ENCODE measurements at regions of chr6 and their contacts with region 1.

Region 1: GRCh38 chr6:106556368-106556960 is 72.8 kb downstream of the RTN4IP1 start:
- DNase-seq: peak; percentile 52 to 67 (median 66)
- H3K4me3 ChIP-seq: no peak overlapping the region
- H3K27ac ChIP-seq: no peak overlapping the region
- H3K4me1 ChIP-seq: peaks cover under 1 to 7% (median 3%) of the 10 kb centered on the region in 4 experiments
- H3K27me3 ChIP-seq: no peaks in the 10 kb centered on the region

Region 2: DNA sequence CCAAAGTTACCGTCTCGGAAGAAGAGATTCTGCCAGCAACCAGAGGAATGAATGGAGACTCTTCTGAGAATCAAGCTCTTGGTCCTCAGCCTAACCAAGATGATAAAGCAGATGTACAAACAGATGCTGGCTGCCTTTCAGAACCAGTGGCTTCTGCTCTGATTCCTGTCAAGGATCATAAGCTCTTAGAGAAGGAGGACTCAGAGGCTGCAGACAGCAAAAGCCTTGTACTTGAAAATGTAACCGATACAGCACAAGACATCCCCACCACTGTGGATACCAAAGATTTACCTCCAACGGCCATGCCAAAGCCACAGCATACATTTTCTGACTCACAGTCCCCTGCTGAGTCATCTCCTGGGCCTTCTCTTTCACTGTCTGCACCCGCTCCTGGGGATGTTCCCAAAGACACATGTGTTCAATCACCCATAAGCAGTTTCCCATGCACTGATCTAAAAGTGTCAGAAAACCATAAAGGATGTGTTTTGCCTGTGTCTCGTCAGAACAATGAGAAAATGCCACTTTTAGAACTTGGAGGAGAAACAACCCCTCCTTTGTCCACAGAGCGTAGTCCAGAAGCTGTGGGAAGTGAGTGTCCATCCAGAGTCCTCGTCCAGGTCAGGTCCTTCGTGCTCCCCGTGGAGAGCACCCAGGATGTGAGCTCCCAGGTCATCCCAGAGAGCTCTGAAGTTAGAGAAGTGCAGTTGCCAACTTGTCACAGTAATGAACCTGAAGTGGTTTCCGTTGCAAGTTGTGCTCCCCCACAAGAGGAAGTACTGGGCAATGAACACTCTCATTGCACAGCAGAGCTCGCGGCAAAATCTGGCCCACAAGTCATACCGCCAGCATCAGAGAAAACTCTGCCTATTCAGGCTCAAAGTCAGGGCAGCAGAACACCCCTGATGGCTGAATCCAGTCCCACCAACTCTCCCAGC is 36.7 kb before region 1 on chr6:
- CTCF ChIA-PET with region 1: interaction called, 139 read pairs
- POLR2A ChIA-PET with region 1: interaction called, 3 read pairs
- DNase-seq: peak; percentile 82 to 97 (median 96)
- H3K4me3 ChIP-seq: peak overlapping the region in 6 of 7 experiments; percentile 7 to 58 (median 45)
- H3K27ac ChIP-seq: peak overlapping the region in 1 of 2 experiments; percentile 59
- H3K4me1 ChIP-seq: peaks cover 57 to 94% (median 73%) of the 10 kb centered on the region in 4 experiments
- H3K27me3 ChIP-seq: no peaks in the 10 kb centered on the region

Region 3: GRCh38 chr6:106568530-106568929 is 12.1 kb after region 1 on chr6:
- CTCF ChIA-PET with region 1: interaction called, 58 read pairs
- POLR2A ChIA-PET with region 1: no interaction called
- DNase-seq: no peak
- H3K4me3 ChIP-seq: no peak overlapping the region
- H3K27ac ChIP-seq: no peak overlapping the region
- H3K4me1 ChIP-seq: no peaks in the 10 kb centered on the region
- H3K27me3 ChIP-seq: no peaks in the 10 kb centered on the region

Region 4: DNA sequence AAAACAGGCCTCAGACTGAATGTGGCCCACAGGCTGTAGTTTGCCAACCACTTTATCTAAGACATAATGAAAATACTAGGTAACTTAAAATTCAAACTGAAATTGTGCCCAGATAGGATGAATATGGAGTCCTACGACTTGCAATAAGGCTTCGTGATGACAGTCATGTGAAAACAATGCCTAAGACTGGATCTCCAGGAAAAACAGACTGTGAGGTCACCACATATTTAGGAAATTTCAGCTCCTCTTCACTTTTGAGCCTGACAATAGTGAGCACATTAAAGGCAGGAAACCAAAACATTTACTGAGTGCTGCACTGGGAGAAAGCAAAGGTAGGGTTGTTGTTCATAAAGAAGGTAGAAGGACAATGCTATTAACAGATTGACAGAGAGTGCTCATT is 22.8 kb after region 1 on chr6:
- CTCF ChIA-PET with region 1: no interaction called
- POLR2A ChIA-PET with region 1: no interaction called
- DNase-seq: no peak
- H3K4me3 ChIP-seq: no peak overlapping the region
- H3K27ac ChIP-seq: no peak overlapping the region
- H3K4me1 ChIP-seq: no peaks in the 10 kb centered on the region
- H3K27me3 ChIP-seq: no peaks in the 10 kb centered on the region

Region 5: DNA sequence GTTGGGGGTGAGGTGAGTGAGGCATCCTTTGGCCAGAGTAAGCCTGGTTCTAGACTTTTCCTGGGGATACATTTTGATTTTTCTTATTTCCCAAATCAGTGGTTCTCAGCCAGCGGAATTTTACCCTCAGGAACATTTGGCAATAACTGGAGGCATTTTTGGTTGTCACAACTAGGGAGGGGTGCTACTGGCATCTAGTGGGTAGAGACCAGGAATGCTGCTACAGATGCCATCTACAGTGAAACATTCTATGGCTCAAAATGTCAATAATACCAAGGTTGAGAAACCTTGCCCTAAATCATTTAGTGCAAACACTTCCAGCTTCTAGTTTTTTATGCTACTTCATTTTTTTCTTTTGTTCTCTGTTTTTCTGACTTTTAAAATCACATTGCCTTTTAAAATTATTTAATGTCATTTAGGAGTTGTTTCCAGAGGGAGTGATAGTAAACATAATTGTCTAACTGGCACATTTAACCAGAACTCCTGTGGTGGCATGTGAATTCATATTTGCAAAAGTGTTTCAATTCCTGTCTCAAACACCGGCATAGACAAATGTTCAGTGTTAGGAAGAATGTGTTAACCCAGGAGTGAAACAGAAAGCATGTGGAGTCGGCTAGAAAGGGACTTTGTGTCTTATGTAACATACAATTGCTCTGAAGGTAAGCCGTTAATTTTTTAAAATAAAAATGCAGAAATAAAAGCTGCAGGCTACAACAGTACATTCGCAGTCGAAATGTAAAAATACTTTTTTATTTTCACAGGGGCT is 131.9 kb after region 1 on chr6:
- CTCF ChIA-PET with region 1: no interaction called
- POLR2A ChIA-PET with region 1: no interaction called
- DNase-seq: no peak
- H3K4me3 ChIP-seq: no peak overlapping the region
- H3K27ac ChIP-seq: no peak overlapping the region
- H3K4me1 ChIP-seq: no peaks in the 10 kb centered on the region
- H3K27me3 ChIP-seq: no peaks in the 10 kb centered on the region

Region 6: DNA sequence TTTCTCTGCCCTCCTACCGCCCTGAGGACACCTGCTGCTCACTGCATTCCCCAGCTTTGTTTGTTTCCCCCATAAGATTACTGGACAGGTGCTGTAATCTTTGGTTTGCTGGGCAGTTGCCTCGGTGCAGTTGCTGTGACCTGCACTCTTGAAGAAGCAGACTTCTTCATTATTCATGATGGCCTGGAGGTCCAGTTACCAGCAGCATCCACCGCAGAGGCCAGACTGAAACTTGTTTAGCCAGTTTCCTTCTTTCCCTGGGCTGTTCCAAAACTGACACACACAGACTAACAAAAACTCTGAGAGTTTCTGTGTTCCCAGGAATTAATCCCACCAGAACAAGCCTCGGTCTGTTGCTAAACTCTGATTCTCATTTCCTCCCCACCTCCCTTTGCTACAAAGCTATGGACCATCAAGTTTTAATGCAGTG is 217.0 kb after region 1 on chr6:
- CTCF ChIA-PET with region 1: no interaction called
- POLR2A ChIA-PET with region 1: no interaction called
- DNase-seq: no peak
- H3K4me3 ChIP-seq: no peak overlapping the region
- H3K27ac ChIP-seq: no peak overlapping the region
- H3K4me1 ChIP-seq: no peaks in the 10 kb centered on the region
- H3K27me3 ChIP-seq: peaks cover 0 to 7% (median 2%) of the 10 kb centered on the region in 5 experiments